MCF 10A (cell line): ENCODE measurements at regions of chr15 and their contacts with region 1.

Region 1: DNA sequence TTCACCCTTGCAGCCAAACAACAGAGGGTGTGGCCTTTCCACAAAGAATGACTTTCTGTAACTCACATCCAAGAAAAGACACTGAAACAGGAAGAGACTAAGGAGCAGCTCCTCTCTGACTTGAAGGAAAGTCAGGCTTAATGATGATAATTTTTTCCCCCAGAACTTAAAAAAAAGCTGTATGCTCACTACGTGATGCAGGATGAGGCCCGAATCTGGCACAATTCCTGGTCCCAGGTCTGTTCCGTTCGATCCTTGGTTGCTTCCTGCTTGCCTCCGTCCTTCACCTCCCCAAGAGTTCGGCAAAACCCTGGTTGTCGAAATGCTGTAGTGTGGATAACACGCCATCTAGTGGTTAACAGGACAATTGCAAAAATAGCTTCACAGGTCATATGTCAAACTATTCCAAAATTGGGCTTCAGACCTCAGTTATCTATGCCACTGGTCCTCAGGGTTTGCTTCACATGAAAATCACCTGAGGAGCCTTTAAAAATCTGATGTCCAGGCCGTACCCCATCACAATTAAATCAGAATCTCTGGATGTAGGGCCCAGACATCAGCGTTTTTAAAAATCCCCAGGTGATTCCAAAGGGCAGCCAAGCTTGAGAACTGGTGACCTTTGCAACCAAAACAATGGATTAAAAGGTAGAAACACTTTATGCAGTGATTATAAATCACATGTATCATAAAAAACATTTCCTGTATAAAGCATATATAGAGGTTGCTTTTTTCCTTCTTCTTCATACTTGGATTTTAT is 28.1 kb upstream of the SYNM start:
- DNase-seq: peak; percentile 84
- H3K4me3 Mint-ChIP-seq: peak overlapping the region; percentile 60
- H3K27ac Mint-ChIP-seq: no peak overlapping the region
- H3K4me1 Mint-ChIP-seq: peaks cover 6% of the 10 kb centered on the region
- H3K27me3 Mint-ChIP-seq: peaks cover 13% of the 10 kb centered on the region
- CTCF ChIP-seq: peak; percentile 66

Region 2: GRCh38 chr15:98442379-98442833 is 634.3 kb before region 1 on chr15:
- CTCF ChIA-PET with region 1: interaction called, 29 read pairs
- POLR2A ChIA-PET with region 1: interaction called, 3 read pairs
- intact Hi-C with region 1: loop called (anchors 1 kb)
- DNase-seq: peak; percentile 89
- H3K4me3 Mint-ChIP-seq: no peak overlapping the region
- H3K27ac Mint-ChIP-seq: no peak overlapping the region
- H3K4me1 Mint-ChIP-seq: peaks cover 9% of the 10 kb centered on the region
- H3K27me3 Mint-ChIP-seq: peaks cover 22% of the 10 kb centered on the region
- CTCF ChIP-seq: peak; percentile 89

Region 3: GRCh38 chr15:98850961-98851573 is 225.7 kb before region 1 on chr15:
- CTCF ChIA-PET with region 1: interaction called, 3 read pairs
- POLR2A ChIA-PET with region 1: no interaction called
- intact Hi-C with region 1: loop called (anchors 1 kb)
- DNase-seq: peak; percentile 63
- H3K4me3 Mint-ChIP-seq: peak overlapping the region; percentile 76
- H3K27ac Mint-ChIP-seq: peak overlapping the region; percentile 74
- H3K4me1 Mint-ChIP-seq: peaks cover 27% of the 10 kb centered on the region
- H3K27me3 Mint-ChIP-seq: no peaks in the 10 kb centered on the region
- CTCF ChIP-seq: peak; percentile 24

Region 4: DNA sequence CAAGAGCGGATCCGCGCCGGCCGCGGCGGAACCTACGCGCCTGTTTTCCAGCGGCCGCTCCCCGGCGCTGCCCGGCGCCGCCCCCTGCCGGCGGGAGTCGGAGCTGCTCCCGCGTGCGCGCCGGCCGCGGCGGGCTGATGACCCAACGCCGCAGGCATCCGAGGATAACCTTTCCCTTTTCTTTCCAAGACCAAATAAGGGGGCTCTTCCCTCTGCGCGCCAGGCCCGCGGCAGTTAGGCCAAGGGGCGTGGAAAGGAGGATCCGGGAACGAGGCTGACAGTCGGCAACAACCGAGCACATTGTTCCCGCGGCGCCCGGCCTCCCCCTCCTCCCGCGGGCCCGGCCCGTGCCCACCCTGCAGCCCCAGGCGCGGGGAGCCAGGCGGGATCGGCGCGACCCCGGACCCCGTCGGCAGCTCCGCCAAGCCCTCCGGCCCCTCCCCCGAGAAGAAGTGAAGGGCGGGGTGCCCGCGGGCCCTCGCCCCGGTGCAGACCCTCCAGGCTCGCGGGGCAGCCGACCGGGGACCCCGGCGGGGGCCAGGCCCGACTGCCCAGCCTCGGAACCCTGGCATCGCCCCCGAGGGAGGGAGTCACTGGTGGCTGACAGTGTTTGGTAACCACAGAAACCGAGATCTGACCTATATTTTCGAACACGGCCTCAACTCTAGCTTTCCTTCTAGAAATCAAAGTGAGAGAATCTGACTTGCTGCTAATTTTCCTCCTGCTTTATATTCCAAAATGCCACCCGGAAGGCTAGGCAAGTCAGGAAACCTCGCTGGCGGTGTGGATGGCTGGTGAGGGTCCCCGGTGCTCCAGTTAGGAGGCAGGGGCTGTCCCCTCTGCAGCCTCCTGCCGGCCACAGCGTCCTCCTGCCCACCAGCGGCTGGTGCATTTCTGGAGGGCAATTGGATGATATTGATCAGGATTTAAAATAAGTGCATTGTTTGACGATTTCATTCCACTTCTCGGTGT is 17.4 kb before region 1 on chr15:
- CTCF ChIA-PET with region 1: interaction called, 24 read pairs
- POLR2A ChIA-PET with region 1: interaction called, 7 read pairs
- intact Hi-C with region 1: no loop called
- DNase-seq: peak; percentile 50
- H3K4me3 Mint-ChIP-seq: peak overlapping the region; percentile 63
- H3K27ac Mint-ChIP-seq: no peak overlapping the region
- H3K4me1 Mint-ChIP-seq: no peaks in the 10 kb centered on the region
- H3K27me3 Mint-ChIP-seq: peaks cover 30% of the 10 kb centered on the region
- CTCF ChIP-seq: peak; percentile 81

Region 5: GRCh38 chr15:99100245-99101173 is 23.8 kb after region 1 on chr15:
- CTCF ChIA-PET with region 1: interaction called, 13 read pairs
- POLR2A ChIA-PET with region 1: no interaction called
- intact Hi-C with region 1: no loop called
- DNase-seq: peak; percentile 71
- H3K4me3 Mint-ChIP-seq: peak overlapping the region; percentile 39
- H3K27ac Mint-ChIP-seq: no peak overlapping the region
- H3K4me1 Mint-ChIP-seq: no peaks in the 10 kb centered on the region
- H3K27me3 Mint-ChIP-seq: no peaks in the 10 kb centered on the region
- CTCF ChIP-seq: peak; percentile 83

Region 6: GRCh38 chr15:99348412-99348811 is 271.7 kb after region 1 on chr15:
- CTCF ChIA-PET with region 1: no interaction called
- POLR2A ChIA-PET with region 1: no interaction called
- intact Hi-C with region 1: no loop called
- DNase-seq: no peak
- H3K4me3 Mint-ChIP-seq: no peak overlapping the region
- H3K27ac Mint-ChIP-seq: no peak overlapping the region
- H3K4me1 Mint-ChIP-seq: no peaks in the 10 kb centered on the region
- H3K27me3 Mint-ChIP-seq: no peaks in the 10 kb centered on the region
- CTCF ChIP-seq: no peak